ENCODE measurements at regions of chr2 and their contacts with region 1.

Region 1: GRCh38 chr2:68943581-68944568 is 8.8 kb downstream of the GKN2 start:
- DNase-seq: no peak
- ATAC-seq: peak; percentile 83
- H3K4me3 ChIP-seq: no peak overlapping the region
- H3K27ac ChIP-seq: no peak overlapping the region
- H3K4me1 ChIP-seq: no peaks in the 10 kb centered on the region
- H3K27me3 ChIP-seq: peaks cover 0 to 3% of the 10 kb centered on the region in 2 experiments; a peak in 2 of 4 replicates
- CTCF ChIP-seq: peak; percentile 67 to 84 (median 72)
- EP300 ChIP-seq: no peak
- POLR2A ChIP-seq: no peak
- RAD21 ChIP-seq: peak; percentile 63

Region 2: DNA sequence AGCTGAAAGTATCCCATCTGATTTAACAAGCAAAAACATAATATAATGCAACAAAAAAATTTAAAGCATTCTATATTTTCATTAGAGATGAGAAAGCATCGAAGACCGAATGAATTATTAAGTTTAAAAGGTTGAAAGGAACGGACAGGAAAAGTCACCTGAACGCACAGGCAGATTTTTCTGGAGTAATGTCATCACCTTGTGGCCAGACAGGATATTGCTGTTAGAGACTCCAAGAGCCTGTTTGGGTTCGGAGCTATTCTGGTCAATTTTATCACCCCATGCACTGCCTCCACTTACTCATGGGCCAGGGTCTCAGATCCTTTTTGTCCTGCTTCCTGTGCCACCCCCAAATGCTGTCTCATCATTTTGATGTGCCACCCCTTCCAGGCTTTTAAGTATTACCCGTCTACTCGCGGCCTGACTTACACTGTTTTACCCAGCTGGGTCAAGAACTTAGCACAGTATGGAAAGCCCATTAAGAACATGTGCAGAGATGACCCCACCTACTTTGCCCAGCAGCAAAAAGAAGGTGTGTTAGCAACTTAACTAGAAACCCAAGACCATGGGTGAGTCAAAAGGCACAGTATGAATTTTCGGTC is 18.5 kb before region 1 on chr2:
- CTCF ChIA-PET with region 1: interaction called, 12 read pairs
- POLR2A ChIA-PET with region 1: no interaction called
- RAD21 ChIA-PET with region 1: interaction called, 3 read pairs
- SMC1A ChIA-PET with region 1: interaction called, 3 read pairs
- in situ Hi-C with region 1: no loop called
- intact Hi-C with region 1: no loop called
- DNase-seq: peak; percentile 12
- ATAC-seq: peak; percentile 83
- H3K4me3 ChIP-seq: no peak overlapping the region
- H3K27ac ChIP-seq: no peak overlapping the region
- H3K4me1 ChIP-seq: no peaks in the 10 kb centered on the region
- H3K27me3 ChIP-seq: peaks cover 0 to 2% of the 10 kb centered on the region in 2 experiments; a peak in 3 of 4 replicates
- CTCF ChIP-seq: peak; percentile 87 to 96 (median 91)
- EP300 ChIP-seq: no peak
- POLR2A ChIP-seq: no peak
- RAD21 ChIP-seq: peak; percentile 90

Region 3: GRCh38 chr2:68959001-68959400 is 15.1 kb after region 1 on chr2:
- CTCF ChIA-PET with region 1: interaction called, 26 read pairs
- POLR2A ChIA-PET with region 1: no interaction called
- RAD21 ChIA-PET with region 1: no interaction called
- SMC1A ChIA-PET with region 1: interaction called, 3 read pairs
- in situ Hi-C with region 1: no loop called
- intact Hi-C with region 1: no loop called
- DNase-seq: no peak
- ATAC-seq: no peak
- H3K4me3 ChIP-seq: no peak overlapping the region
- H3K27ac ChIP-seq: no peak overlapping the region
- H3K4me1 ChIP-seq: no peaks in the 10 kb centered on the region
- H3K27me3 ChIP-seq: no peaks in the 10 kb centered on the region; a peak in 1 of 4 replicates
- CTCF ChIP-seq: no peak
- EP300 ChIP-seq: no peak
- POLR2A ChIP-seq: no peak
- RAD21 ChIP-seq: no peak

Region 4: GRCh38 chr2:68971591-68972231 is 27.8 kb after region 1 on chr2:
- CTCF ChIA-PET with region 1: interaction called, 10 read pairs
- POLR2A ChIA-PET with region 1: no interaction called
- RAD21 ChIA-PET with region 1: no interaction called
- SMC1A ChIA-PET with region 1: no interaction called
- in situ Hi-C with region 1: no loop called
- intact Hi-C with region 1: no loop called
- DNase-seq: no peak
- ATAC-seq: no peak
- H3K4me3 ChIP-seq: no peak overlapping the region
- H3K27ac ChIP-seq: no peak overlapping the region
- H3K4me1 ChIP-seq: no peaks in the 10 kb centered on the region
- H3K27me3 ChIP-seq: peaks cover 0 to 3% of the 10 kb centered on the region in 2 experiments; a peak in 1 of 4 replicates
- CTCF ChIP-seq: no peak
- EP300 ChIP-seq: no peak
- POLR2A ChIP-seq: no peak
- RAD21 ChIP-seq: no peak

Region 5: GRCh38 chr2:69306822-69307578 is 363.1 kb after region 1 on chr2:
- CTCF ChIA-PET with region 1: interaction called, 7 read pairs
- POLR2A ChIA-PET with region 1: no interaction called
- RAD21 ChIA-PET with region 1: no interaction called
- SMC1A ChIA-PET with region 1: no interaction called
- in situ Hi-C with region 1: no loop called
- intact Hi-C with region 1: loop called (anchors 2 kb)
- DNase-seq: no peak
- ATAC-seq: peak; percentile 97
- H3K4me3 ChIP-seq: peak overlapping the region; percentile 45; the same call in 1 of the 2 replicates
- H3K27ac ChIP-seq: no peak overlapping the region
- H3K4me1 ChIP-seq: 0 out of 2 replicates have a peak, but pooled peaks cover 5% of the 10 kb centered on the region
- H3K27me3 ChIP-seq: peaks cover 4 to 18% of the 10 kb centered on the region in 2 experiments
- CTCF ChIP-seq: peak; percentile 66 to 91 (median 79)
- EP300 ChIP-seq: no peak
- POLR2A ChIP-seq: peak; percentile 51
- RAD21 ChIP-seq: peak; percentile 85

Measured in GM12878 (cell line).